HepG2 (cell line): ENCODE measurements at regions of chr4 and their contacts with region 1.

Region 1: GRCh38 chr4:11424000-11424399 is 4.7 kb downstream of the HS3ST1 start:
- DNase-seq: peak; percentile 39
- ATAC-seq: peak; percentile 79
- H3K4me3 ChIP-seq: no peak overlapping the region
- H3K27ac ChIP-seq: no peak overlapping the region
- H3K4me1 ChIP-seq: no peaks in the 10 kb centered on the region
- H3K27me3 ChIP-seq: 0 out of 5 replicates have a peak, but pooled peaks cover 0 to 1% of the 10 kb centered on the region in 2 experiments
- CTCF ChIP-seq: peak; percentile 59
- EP300 ChIP-seq: no peak
- POLR2A ChIP-seq: no peak
- RAD21 ChIP-seq: no peak

Region 2: DNA sequence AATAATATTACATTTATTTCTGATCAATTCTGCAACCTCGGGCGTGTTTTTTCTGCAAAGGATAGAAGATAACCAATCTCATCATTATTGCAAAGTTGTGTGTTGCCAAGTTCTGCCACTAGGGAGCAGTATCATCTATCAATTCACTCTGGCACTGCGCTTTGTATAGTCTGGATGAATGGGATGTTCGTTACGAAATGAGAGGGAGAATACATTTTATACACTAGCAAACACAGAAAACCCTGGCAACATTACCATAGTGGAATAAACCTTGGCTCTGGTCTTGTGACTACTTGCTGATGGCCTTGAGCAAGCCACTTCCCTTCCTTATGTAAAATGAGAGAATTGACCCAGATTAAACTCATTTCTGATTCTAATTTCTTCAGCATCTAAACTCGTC is 869.3 kb before region 1 on chr4:
- CTCF ChIA-PET with region 1: no interaction called
- POLR2A ChIA-PET with region 1: no interaction called
- in situ Hi-C with region 1: no loop called
- intact Hi-C with region 1: loop called (anchors 1 kb)
- DNase-seq: peak; percentile 38
- ATAC-seq: peak; percentile 77
- H3K4me3 ChIP-seq: no peak overlapping the region
- H3K27ac ChIP-seq: no peak overlapping the region
- H3K4me1 ChIP-seq: no peaks in the 10 kb centered on the region
- H3K27me3 ChIP-seq: no peaks in the 10 kb centered on the region
- CTCF ChIP-seq: peak; percentile 76
- EP300 ChIP-seq: no peak
- POLR2A ChIP-seq: no peak
- RAD21 ChIP-seq: 0 out of 2 replicates have a peak, but pooled peaks have one; percentile 29

Region 3: DNA sequence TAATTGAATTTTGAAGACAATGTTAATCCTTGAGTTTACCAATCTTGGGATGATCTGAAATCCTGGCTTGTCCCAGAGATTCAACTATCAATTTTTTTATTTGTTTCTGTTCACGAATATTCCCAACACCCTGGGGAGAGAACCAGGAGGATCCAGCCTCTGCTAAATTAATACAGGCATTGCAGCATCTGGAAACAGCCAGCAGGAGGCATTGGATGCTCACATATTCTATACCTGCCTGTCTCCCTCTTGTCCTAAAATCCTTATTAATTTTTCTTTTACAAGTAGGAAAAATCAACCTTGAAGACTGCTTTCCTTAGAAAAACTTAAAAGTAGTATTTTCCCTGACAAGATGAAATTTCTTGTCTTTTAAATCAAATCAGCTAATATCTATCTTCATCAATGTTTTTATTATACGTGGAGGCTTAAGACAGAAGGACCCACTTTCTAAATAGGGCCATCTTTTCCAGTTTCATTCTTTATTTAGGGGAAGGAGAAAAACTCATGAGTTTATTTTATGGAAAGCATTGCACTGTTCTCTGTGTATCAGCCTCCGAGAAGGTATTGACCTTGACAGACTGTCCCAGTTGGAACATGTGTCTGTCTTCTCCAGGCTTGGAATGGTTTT is 841.8 kb before region 1 on chr4:
- CTCF ChIA-PET with region 1: interaction called, 17 read pairs
- POLR2A ChIA-PET with region 1: no interaction called
- in situ Hi-C with region 1: loop called (anchors 5 kb)
- intact Hi-C with region 1: loop called (anchors 1 kb)
- DNase-seq: peak; percentile 12
- ATAC-seq: peak; percentile 82
- H3K4me3 ChIP-seq: no peak overlapping the region
- H3K27ac ChIP-seq: no peak overlapping the region
- H3K4me1 ChIP-seq: no peaks in the 10 kb centered on the region
- H3K27me3 ChIP-seq: no peaks in the 10 kb centered on the region
- CTCF ChIP-seq: peak; percentile 71
- EP300 ChIP-seq: no peak
- POLR2A ChIP-seq: no peak
- RAD21 ChIP-seq: peak; percentile 48

Region 4: GRCh38 chr4:11165052-11165451 is 258.9 kb before region 1 on chr4:
- CTCF ChIA-PET with region 1: no interaction called
- POLR2A ChIA-PET with region 1: no interaction called
- in situ Hi-C with region 1: no loop called
- intact Hi-C with region 1: no loop called
- DNase-seq: no peak
- ATAC-seq: no peak
- H3K4me3 ChIP-seq: no peak overlapping the region
- H3K27ac ChIP-seq: no peak overlapping the region
- H3K4me1 ChIP-seq: no peaks in the 10 kb centered on the region
- H3K27me3 ChIP-seq: no peaks in the 10 kb centered on the region
- CTCF ChIP-seq: no peak
- EP300 ChIP-seq: no peak
- POLR2A ChIP-seq: no peak
- RAD21 ChIP-seq: no peak

Region 5: GRCh38 chr4:11487876-11488544 is 64.0 kb after region 1 on chr4:
- CTCF ChIA-PET with region 1: no interaction called
- POLR2A ChIA-PET with region 1: no interaction called
- in situ Hi-C with region 1: no loop called
- intact Hi-C with region 1: no loop called
- DNase-seq: no peak
- ATAC-seq: no peak
- H3K4me3 ChIP-seq: no peak overlapping the region
- H3K27ac ChIP-seq: no peak overlapping the region
- H3K4me1 ChIP-seq: no peaks in the 10 kb centered on the region
- H3K27me3 ChIP-seq: no peaks in the 10 kb centered on the region
- CTCF ChIP-seq: no peak
- EP300 ChIP-seq: no peak
- POLR2A ChIP-seq: no peak
- RAD21 ChIP-seq: no peak